ENCODE measurements at regions of chr17 and their contacts with region 1.

Region 1: GRCh38 chr17:29219378-29220047 is 27.1 kb upstream of the CRYBA1 start:
- DNase-seq: peak; percentile 78

Region 2: GRCh38 chr17:29124117-29124924 is 95.2 kb before region 1 on chr17:
- CTCF ChIA-PET with region 1: interaction called, 19 read pairs
- POLR2A ChIA-PET with region 1: interaction called, 3 read pairs
- DNase-seq: peak; percentile 62

Region 3: GRCh38 chr17:29148790-29149430 is 70.6 kb before region 1 on chr17:
- CTCF ChIA-PET with region 1: interaction called, 40 read pairs
- POLR2A ChIA-PET with region 1: interaction called, 10 read pairs
- DNase-seq: peak; percentile 87

Region 4: DNA sequence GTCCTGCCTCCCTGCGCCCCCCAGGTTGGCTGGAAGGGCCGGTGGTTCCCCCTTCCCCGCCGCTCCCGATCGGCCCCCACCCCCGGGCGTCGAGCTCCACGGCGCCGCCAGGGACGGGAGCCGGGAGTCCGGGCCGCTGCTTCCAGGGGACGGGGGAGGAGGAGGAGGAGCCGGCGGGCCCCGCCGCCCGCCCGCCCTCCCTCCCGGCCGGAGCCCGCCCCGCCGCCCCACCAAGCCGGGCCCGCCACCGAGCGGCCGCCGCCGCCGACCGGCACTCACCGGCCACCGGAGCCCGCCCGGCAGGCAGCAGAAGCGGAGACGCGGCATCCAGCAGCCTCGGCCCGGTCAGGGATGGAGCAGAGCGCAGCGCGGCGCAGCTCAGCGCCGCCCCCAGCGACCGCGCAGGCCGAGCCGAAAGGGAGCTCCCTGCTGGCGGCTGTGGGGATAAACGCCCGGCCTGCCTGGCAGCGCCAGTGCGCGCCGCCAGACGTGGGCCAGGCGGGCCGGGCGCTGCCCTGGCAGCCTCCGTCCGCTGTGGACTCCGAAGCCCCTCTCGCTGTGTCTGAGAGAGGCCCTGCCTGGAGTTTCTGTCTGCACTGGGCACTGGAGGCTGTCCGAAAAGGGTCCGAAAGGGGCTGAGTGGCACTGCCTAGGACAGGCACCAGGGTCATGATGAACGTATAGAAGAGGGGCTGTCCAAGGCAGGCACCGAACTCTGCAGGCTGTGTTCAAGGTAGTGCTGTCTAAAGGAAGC is 39.3 kb before region 1 on chr17 and contains the start of gene MYO18A:
- CTCF ChIA-PET with region 1: interaction called, 12 read pairs
- POLR2A ChIA-PET with region 1: interaction called, 5 read pairs
- DNase-seq: peak; percentile 82

Region 5: DNA sequence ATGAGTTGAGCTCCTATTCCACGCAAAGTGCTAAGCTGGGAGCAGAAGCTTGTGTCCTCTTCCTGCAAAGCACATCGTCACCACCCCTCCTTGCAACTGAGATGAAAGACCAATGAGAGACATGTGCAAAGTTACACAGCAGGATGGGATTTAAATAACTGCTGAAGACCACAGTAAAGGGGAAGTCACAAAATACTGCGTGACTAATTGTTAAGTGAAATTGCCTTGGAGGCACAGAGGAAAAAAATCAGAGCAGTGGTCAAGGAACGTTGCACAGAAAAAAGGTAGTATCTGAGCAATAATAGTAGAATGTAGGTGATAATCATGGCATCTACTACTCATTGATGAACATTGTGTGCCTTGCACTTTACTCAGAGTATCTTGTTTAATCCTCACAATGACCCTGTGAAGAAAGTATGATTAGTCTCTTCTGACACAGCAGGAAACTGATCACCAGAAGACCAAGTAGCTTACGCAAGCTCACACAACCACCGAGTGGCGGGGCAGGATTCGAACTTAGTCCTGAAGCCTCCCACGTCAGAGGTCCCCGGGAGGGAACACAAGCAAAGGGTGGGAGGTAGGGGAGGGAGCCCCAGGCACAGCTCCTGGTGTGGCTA is 23.9 kb before region 1 on chr17:
- CTCF ChIA-PET with region 1: interaction called, 14 read pairs
- POLR2A ChIA-PET with region 1: no interaction called
- DNase-seq: no peak

Region 6: DNA sequence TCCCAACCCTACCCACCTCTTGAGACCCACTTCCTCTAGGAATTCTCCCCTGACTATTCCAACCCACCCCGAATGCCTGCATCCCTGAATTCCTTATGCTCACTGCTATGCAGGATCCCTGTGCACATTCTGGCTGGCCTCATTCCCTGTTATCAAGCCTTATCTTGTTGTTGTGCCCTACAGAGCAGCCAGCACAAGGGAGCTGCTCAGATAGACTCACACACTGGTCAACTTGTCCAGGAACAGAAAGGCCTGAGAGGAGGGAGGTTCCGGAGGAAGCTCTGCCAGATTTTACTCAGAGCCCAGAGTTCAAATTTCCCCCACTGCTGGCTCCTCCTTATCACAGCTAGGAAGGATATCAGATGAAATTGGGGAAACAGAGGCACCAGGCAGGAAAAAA is 14.5 kb before region 1 on chr17:
- CTCF ChIA-PET with region 1: interaction called, 14 read pairs
- POLR2A ChIA-PET with region 1: interaction called, 5 read pairs
- DNase-seq: no peak

Region 7: DNA sequence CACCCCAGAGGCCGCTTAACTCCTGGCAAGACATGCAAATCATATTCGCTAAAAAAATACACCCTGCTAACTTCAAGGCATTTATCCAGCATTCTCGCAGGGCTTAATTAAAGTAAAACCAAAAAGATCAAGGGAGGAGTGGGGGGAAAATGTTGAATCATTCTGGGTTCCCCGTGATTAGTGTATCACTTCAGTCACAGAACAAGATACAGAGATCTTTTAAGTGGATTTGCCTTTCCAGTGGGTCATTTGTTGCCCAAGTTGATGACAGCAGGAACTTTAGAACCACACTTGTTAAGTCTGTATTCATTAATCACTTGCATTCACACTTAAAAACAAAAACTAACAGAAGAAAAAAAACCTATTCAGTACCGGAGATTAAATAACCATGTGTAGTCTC is 44.4 kb after region 1 on chr17:
- CTCF ChIA-PET with region 1: no interaction called
- POLR2A ChIA-PET with region 1: no interaction called
- DNase-seq: no peak

Region 8: GRCh38 chr17:29326023-29326813 is 106.7 kb after region 1 on chr17:
- CTCF ChIA-PET with region 1: no interaction called
- POLR2A ChIA-PET with region 1: no interaction called
- DNase-seq: no peak

Region 9: DNA sequence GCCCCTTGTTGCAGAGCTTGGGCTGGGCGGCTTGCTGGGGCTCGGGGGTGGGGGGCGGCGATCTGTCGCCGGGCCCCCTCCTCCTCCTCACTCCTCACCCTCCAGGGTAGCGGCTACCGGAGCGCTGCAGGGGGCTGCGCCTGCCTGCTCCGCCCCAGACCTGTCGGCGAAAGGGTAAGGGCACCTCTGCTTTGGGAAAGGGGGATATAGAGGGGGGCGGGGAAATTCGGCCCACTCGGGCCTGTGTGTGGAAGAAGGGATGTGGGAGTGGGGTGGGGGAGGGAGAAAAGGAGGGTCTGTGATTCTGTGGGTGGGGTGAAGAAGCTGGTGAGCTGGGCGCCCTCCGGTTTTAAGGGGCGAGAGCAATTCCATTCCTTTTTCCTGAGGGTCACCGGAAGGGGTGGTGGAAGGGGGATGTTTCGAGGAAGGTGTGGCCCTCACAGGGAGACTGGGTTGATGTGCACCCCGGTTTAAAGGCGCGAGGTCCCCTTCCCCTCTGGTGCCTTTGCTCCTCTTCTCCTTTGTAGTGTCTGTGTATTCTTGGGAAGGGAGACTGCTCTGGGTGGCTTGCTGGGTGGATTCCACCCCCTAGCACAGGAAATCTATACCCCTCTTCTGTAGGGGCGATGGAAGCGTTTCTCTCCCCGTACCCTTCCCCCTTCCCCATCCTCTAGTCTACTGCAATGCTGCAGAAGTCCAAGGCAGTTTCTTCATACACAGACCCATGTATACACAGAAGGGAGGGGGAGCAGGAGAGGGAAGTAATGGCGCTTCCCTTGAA is 171.5 kb after region 1 on chr17:
- CTCF ChIA-PET with region 1: no interaction called
- POLR2A ChIA-PET with region 1: no interaction called
- DNase-seq: peak; percentile 19

Measured in HEK293T (cell line).